ENCODE measurements at regions of chr12 and their contacts with region 1.

Region 1: DNA sequence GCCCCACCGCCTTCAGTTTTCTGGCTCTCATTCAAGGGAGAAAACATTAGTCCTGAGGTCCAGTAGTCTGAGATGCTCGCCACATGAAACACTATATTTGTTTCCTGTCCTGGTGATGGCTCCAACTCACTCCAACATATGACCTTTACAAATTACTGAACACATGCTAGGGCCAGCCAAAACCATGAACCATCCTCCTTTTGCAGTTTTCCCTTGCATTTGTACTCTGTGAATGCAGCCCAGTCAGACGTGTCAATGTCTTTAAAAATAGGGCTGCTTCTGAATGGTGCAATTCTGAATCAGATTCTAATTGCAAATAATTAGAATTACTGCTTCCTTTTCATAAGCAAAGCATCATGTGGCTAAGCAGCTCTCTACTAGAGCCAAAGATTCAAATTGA is 36.0 kb downstream of the ADAMTS20 start:
- DNase-seq: no peak
- H3K4me3 Mint-ChIP-seq: no peak overlapping the region
- H3K27ac Mint-ChIP-seq: no peak overlapping the region
- H3K4me1 Mint-ChIP-seq: no peaks in the 10 kb centered on the region
- H3K27me3 Mint-ChIP-seq: no peaks in the 10 kb centered on the region

Region 2: DNA sequence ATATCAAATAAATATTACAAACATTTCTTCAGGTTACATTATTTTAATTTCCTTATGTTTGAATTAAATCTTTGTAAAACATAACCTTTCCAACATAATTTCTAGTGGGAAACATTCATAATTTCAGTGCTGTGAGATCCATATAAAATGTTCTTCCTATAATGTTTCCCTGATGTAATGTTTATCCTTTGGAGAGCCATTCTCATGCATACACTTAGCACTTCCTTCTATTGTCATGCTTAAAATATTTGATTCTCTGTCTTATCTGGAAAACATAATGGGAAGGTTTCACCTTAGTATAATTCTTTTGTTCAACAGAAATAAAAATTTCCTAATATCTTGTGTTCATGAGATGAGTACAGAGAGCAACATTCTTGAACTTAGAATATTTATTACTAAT is 436.6 kb before region 1 on chr12:
- CTCF ChIA-PET with region 1: no interaction called
- intact Hi-C with region 1: loop called (anchors 5 kb)
- DNase-seq: no peak
- H3K4me3 Mint-ChIP-seq: no peak overlapping the region
- H3K27ac Mint-ChIP-seq: no peak overlapping the region
- H3K4me1 Mint-ChIP-seq: no peaks in the 10 kb centered on the region
- H3K27me3 Mint-ChIP-seq: no peaks in the 10 kb centered on the region

Region 3: GRCh38 chr12:43766291-43766690 is 250.2 kb after region 1 on chr12:
- CTCF ChIA-PET with region 1: no interaction called
- intact Hi-C with region 1: no loop called
- DNase-seq: no peak
- H3K4me3 Mint-ChIP-seq: no peak overlapping the region
- H3K27ac Mint-ChIP-seq: no peak overlapping the region
- H3K4me1 Mint-ChIP-seq: peaks cover 31% of the 10 kb centered on the region
- H3K27me3 Mint-ChIP-seq: no peaks in the 10 kb centered on the region